Endothelial cell of umbilical vein (primary cell): ENCODE measurements at regions of chr2 and their contacts with region 1.

Region 1: GRCh38 chr2:208175069-208175839 is 11.9 kb upstream of the CRYGA start:
- DNase-seq: peak; percentile 80
- H3K4me3 ChIP-seq: no peak overlapping the region
- H3K27ac ChIP-seq: no peak overlapping the region
- H3K4me1 ChIP-seq: no peaks in the 10 kb centered on the region
- H3K27me3 ChIP-seq: no peaks in the 10 kb centered on the region
- CTCF ChIP-seq: peak; percentile 86 to 88
- POLR2A ChIP-seq: no peak

Region 2: GRCh38 chr2:208153156-208153555 is 22.1 kb before region 1 on chr2:
- CTCF ChIA-PET with region 1: interaction called, 12 read pairs
- POLR2A ChIA-PET with region 1: no interaction called
- dilution Hi-C with region 1: no loop called
- intact Hi-C with region 1: no loop called
- DNase-seq: no peak
- H3K4me3 ChIP-seq: no peak overlapping the region
- H3K27ac ChIP-seq: no peak overlapping the region
- H3K4me1 ChIP-seq: no peaks in the 10 kb centered on the region
- H3K27me3 ChIP-seq: no peaks in the 10 kb centered on the region
- CTCF ChIP-seq: no peak
- POLR2A ChIP-seq: no peak

Region 3: DNA sequence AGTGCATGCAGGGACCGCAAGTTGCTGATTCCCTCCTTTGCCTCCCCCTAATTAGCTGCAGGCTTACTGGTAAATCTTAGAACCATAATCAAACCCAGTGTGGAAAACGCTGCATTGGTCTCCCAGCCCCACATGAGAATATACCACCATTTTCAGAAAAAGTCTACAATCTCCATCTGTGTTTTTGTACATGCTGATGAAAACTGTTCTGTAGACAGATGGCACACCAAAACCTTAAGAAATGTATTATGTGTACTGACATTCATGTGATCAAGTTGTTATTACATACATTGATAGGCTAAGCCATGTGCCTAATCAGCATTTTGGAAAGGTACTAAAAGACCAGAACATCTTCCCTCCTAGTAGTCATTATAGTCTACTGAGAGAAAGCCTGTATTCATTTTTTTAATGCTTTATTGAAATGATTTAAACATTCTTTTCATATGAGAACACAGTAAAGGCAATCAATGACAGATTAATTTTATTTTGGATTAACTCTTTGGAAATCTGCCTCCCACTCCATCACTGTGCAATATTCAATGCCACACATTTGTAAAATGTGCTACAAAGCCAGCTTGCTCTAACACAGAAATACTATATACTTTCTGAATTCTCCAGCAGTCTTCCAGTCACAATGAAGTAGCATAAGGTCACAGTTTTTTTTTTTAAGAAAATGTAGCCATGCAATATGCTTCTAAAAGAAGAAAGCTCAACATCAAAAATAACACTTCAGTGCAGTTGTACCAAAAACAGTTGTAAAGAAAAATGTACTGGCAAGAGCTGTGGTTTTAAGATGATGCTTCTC is 10.1 kb before region 1 on chr2:
- CTCF ChIA-PET with region 1: interaction called, 13 read pairs
- POLR2A ChIA-PET with region 1: no interaction called
- dilution Hi-C with region 1: no loop called
- intact Hi-C with region 1: no loop called
- DNase-seq: no peak
- H3K4me3 ChIP-seq: no peak overlapping the region
- H3K27ac ChIP-seq: no peak overlapping the region
- H3K4me1 ChIP-seq: no peaks in the 10 kb centered on the region
- H3K27me3 ChIP-seq: peaks cover 0 to 5% of the 10 kb centered on the region in 2 experiments
- CTCF ChIP-seq: no peak
- POLR2A ChIP-seq: no peak

Region 4: DNA sequence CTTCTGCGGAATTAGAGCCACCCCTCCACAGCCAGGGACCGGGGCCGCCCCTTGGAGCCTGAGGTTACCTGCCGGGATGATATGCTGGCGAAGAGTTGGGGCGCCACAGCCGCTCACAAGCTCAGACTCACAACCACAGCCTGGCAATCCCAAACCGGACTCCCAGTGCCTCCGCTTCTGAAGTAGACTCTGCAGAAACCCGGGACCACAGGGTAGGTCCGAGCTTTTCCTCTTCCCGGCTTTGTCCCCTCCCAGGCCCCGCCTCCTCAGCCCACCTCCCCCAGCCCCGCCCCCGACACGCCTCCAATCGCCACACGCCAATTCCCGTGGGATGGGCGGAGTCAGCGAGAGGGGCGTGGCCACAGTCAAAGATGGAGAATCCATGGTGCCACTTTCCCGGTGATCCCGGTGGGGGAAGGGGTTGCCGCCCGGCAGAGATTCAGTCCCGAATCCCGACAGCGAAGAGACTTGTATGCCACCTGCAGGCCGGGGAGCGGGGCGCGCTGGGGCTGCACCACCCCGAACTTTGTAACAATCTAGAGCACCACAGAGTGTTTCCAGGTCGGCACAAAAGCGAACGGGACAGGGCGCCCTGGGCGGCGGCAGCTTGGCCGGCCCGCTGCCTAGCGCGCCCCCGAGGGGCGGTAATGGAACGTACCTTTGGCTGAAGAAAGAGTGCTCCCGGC is 79.8 kb after region 1 on chr2 and contains the start of gene IDH1:
- CTCF ChIA-PET with region 1: interaction called, 90 read pairs
- POLR2A ChIA-PET with region 1: interaction called, 3 read pairs
- dilution Hi-C with region 1: no loop called
- intact Hi-C with region 1: loop called (anchors 1 kb)
- DNase-seq: peak; percentile 95
- H3K4me3 ChIP-seq: peak within 1 kb of the TSS; percentile 74 to 99 (median 99)
- H3K27ac ChIP-seq: peak within 1 kb of the TSS; percentile 50
- H3K4me1 ChIP-seq: peaks cover 24% of the 10 kb centered on the region
- H3K27me3 ChIP-seq: no peaks in the 10 kb centered on the region
- CTCF ChIP-seq: peak; percentile 52 to 74
- POLR2A ChIP-seq: peak; percentile 58
- total RNA-seq, gene IDH1: 107 and 124 TPM in 2 replicates

Region 5: GRCh38 chr2:208346756-208347155 is 171.5 kb after region 1 on chr2:
- CTCF ChIA-PET with region 1: no interaction called
- POLR2A ChIA-PET with region 1: no interaction called
- dilution Hi-C with region 1: no loop called
- intact Hi-C with region 1: loop called (anchors 10 kb)
- DNase-seq: no peak
- H3K4me3 ChIP-seq: no peak overlapping the region
- H3K27ac ChIP-seq: no peak overlapping the region
- H3K4me1 ChIP-seq: no peaks in the 10 kb centered on the region
- H3K27me3 ChIP-seq: no peaks in the 10 kb centered on the region
- CTCF ChIP-seq: no peak
- POLR2A ChIP-seq: no peak

Region 6: GRCh38 chr2:208373460-208374089 is 198.3 kb after region 1 on chr2:
- CTCF ChIA-PET with region 1: no interaction called
- POLR2A ChIA-PET with region 1: no interaction called
- dilution Hi-C with region 1: no loop called
- intact Hi-C with region 1: loop called (anchors 10 kb)
- DNase-seq: peak; percentile 28
- H3K4me3 ChIP-seq: no peak overlapping the region
- H3K27ac ChIP-seq: no peak overlapping the region
- H3K4me1 ChIP-seq: no peaks in the 10 kb centered on the region
- H3K27me3 ChIP-seq: no peaks in the 10 kb centered on the region
- CTCF ChIP-seq: peak; percentile 46 to 70
- POLR2A ChIP-seq: no peak

Region 7: DNA sequence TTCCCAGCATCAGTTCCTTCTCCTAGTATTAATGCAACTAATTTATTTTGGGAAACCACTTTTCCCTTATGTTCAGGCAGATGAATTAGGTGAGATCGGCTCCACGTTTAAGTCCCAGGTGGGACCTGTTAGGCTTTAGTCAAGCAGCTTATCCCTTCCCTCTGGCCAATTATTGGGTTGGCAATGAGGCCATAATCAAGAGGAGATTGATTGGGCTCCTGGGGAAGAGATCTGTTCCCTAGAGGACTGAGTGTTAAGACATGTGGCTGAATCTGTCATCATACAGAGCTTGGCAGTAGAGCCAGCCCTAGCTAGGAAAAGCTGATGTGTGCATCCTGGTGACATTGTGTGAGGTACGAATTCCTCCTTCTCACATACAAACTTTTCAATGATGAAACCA is 335.8 kb after region 1 on chr2:
- CTCF ChIA-PET with region 1: no interaction called
- POLR2A ChIA-PET with region 1: no interaction called
- dilution Hi-C with region 1: no loop called
- intact Hi-C with region 1: no loop called
- DNase-seq: no peak
- H3K4me3 ChIP-seq: no peak overlapping the region
- H3K27ac ChIP-seq: no peak overlapping the region
- H3K4me1 ChIP-seq: no peaks in the 10 kb centered on the region
- H3K27me3 ChIP-seq: no peaks in the 10 kb centered on the region
- CTCF ChIP-seq: no peak
- POLR2A ChIP-seq: no peak